Posterior cingulate gyrus (tissue), 11 donors: ENCODE measurements at regions of chr5 and their contacts with region 1.

Region 1: DNA sequence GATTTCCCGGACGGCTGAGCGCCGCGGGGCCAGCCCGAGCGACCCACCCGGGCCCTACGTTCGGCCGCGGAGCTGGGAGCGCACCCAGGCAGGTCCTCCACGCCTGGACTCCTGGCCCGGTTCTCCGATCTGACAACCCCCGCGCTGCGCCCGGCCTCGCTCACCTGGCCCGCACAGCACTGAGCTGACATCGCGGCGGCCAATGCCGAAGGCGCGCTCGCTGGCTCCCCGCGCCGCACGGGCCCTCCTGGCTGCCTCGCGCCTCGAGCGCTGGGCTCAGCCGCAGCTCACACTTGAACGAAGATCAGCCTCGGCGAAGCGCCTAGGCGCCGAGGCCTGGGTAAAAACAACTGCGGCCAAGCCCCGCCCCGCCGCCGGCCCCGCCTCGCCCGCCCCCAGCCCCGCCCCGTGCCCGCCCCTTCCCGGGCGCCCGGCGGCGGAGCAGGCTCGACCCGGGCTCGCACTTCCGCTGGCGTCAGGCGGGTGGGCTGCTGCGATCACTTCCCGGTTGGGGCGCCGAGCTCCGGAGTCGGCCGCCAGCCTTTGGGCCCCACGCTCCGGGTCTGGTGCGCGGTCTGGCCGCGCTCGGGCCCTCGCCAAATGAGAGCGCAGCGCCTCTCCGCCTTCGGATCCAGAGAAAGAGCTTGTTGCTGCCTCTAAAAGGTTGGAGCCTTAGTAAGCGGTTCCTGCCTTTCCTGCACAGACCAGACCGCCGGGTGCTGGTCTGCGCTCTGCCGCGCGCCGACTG is at the start of gene SERINC5:
- DNase-seq: peak; percentile 74 to 98 (median 86)

Region 2: GRCh38 chr5:80093796-80094195 is 162.1 kb before region 1 on chr5:
- intact Hi-C with region 1: loop called (anchors 5 kb)
- DNase-seq: no peak

Region 3: GRCh38 chr5:80141147-80141671 is 114.7 kb before region 1 on chr5:
- intact Hi-C with region 1: loop called (anchors 5 kb)
- DNase-seq: peak in 9 of 10 donors; percentile 22 to 91 (median 46)

Region 4: GRCh38 chr5:80156156-80156555 is 99.8 kb before region 1 on chr5:
- intact Hi-C with region 1: no loop called
- DNase-seq: no peak

Region 5: GRCh38 chr5:80191991-80192398 is 63.9 kb before region 1 on chr5:
- intact Hi-C with region 1: loop called (anchors 2 kb)
- DNase-seq: peak in 7 of 10 donors; percentile 24 to 92 (median 34)

Region 6: DNA sequence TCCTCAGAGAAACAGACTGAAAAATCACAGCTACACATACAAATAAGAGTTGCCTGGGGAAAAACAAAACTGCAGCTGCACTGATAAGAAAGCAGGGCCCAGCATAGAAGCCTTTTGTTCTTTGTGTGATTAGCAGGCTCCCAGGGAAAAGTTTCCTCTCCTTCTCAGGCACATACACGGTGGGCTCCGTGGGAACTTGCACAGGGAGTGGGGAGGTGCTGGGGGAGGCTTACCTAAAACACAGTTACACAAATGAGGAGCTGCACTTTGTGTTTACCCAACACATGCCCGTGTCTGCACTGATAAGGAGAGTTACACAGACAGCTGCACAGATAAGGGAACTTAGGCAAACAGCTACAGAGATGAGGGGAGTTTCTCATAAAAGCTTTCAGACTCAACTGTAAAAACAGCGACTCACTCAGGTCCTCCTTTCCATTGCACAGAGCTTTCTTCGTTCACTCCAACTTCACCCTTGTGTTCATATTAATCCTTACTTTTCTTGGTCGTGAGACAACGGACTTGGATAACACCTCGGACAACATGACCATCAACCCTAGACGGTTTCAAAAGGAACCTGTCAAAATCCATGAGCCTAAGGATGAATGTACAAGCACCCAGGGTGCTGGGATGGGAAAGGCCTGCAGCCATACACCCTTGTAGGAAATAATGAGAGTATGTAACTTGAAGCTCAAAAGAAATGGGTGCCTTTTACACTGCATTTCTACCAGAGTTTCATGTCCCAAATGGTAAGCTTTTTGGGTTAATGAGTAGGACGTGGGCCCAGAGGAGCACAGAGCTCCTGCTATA is 50.9 kb before region 1 on chr5:
- intact Hi-C with region 1: no loop called
- DNase-seq: no peak

Region 7: GRCh38 chr5:80216753-80217596 is 38.9 kb before region 1 on chr5:
- intact Hi-C with region 1: loop called (anchors 5 kb)
- DNase-seq: peak; percentile 69 to 95 (median 76)

Region 8: GRCh38 chr5:80296121-80296520 is 40.2 kb after region 1 on chr5:
- intact Hi-C with region 1: no loop called
- DNase-seq: no peak

Region 9: DNA sequence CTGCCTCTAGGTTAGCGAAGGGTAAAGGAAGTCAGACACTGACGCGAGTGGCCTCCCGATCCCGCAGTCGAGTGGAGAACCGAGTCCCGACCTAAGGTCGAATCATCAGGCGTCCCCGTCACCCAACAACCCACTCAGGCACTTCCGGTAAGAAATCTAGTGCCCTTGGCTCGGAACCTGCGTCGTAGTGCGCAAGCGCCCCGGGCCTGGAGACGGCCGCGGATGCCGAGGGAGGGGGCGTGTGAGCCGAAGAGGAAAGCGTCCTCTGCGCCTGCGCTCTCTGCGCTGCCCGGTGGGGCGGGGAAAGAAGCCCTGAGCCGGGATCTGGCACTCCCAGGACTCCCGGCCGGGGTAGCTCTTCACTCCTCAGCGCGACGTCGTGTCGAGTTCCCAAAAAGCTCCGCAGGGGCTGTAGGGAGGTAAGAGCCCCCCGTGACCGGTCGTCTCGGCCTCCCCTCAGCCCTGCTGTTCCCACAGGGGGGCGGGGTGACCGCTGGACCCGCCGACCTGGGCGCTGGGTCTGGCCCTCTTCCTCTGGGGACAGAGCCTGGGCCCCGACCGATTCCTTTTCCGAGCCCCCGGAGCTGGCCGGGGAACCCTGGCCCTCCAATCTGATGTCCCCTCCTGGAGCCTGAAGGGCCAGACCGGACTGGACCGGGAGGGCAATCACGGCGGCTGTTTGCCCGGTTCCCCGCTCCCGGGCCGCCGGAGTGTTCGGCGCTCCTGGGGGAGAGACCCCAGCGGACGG is 152.0 kb after region 1 on chr5 and contains the start of gene ZFYVE16:
- intact Hi-C with region 1: loop called (anchors 5 kb)
- DNase-seq: peak; percentile 95 to 100 (median 98)

Region 10: DNA sequence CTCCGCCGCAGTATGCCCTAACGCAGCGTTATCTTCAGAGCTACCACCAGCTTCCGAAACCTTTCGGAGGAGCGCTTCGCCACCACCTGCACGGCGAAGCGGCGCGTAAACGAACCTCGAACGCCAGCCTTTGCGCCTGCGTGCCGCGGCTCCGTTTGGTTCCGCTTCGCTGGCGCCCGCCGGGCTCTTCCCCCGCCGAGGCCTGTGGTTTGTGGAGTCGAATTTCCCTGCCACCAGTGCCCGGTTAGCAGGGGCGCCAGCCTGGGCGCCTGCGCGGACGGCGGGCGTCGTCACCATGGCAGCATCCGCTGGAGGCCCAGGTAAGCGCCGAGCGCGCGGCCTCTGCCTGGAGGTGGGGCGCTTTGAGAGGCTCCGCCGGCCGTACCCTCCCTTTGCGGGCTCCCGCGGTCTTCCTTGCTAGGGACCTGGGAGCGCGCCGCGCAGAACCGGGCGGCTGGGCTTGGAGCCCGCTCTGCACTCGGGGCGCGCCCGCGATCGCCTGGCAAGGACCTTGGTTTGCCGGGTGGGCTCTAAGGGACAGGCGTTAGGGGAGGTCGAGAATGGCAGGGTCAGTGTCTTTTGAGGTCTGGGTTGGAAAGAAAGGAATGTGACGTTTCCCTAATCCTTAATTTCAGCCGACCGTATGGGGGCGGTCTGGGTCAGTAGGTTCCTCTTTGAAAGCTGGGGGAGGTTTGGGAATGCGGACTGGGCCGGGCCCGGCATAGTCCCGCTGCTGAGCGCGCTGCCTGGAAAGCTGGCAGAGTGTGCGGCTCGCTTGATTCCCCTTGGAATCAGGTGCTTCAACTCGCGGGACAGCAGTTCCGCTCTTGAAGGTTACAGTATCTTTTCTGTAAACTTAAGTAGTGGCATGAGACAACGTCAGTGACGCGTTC is 232.2 kb after region 1 on chr5 and contains the start of gene FAM151B:
- intact Hi-C with region 1: loop called (anchors 10 kb)
- DNase-seq: peak; percentile 68 to 98 (median 85)

Region 11: GRCh38 chr5:80540691-80541090 is 284.8 kb after region 1 on chr5:
- intact Hi-C with region 1: no loop called
- DNase-seq: no peak